Esophagus muscularis mucosa (tissue), 4 donors: ENCODE measurements at regions of chr18 and their contacts with region 1.

Region 1: GRCh38 chr18:741931-742512 is 29.6 kb upstream of the ENOSF1 start:
- DNase-seq: no peak
- H3K4me3 ChIP-seq: no peak overlapping the region
- H3K27ac ChIP-seq: no peak overlapping the region
- H3K4me1 ChIP-seq: no peaks in the 10 kb centered on the region
- H3K27me3 ChIP-seq: no peaks in the 10 kb centered on the region
- CTCF ChIP-seq: peak; percentile 72 to 80 (median 73)
- EP300 ChIP-seq: no peak
- POLR2A ChIP-seq: no peak

Region 2: GRCh38 chr18:830315-830901 is 88.4 kb after region 1 on chr18:
- intact Hi-C with region 1: loop called (anchors 5 kb)
- DNase-seq: no peak
- H3K4me3 ChIP-seq: no peak overlapping the region
- H3K27ac ChIP-seq: peak overlapping the region in 2 of 4 donors; percentile 7 to 14
- H3K4me1 ChIP-seq: peaks cover 4 to 14% (median 4%) of the 10 kb centered on the region in 4 donors
- H3K27me3 ChIP-seq: peaks cover 0 to 13% (median 0%) of the 10 kb centered on the region in 4 donors
- CTCF ChIP-seq: no peak
- EP300 ChIP-seq: no peak
- POLR2A ChIP-seq: no peak

Region 3: GRCh38 chr18:1483385-1483784 is 741.4 kb after region 1 on chr18:
- intact Hi-C with region 1: no loop called
- DNase-seq: no peak
- H3K4me3 ChIP-seq: no peak overlapping the region
- H3K27ac ChIP-seq: no peak overlapping the region
- H3K4me1 ChIP-seq: no peaks in the 10 kb centered on the region
- H3K27me3 ChIP-seq: no peaks in the 10 kb centered on the region
- CTCF ChIP-seq: no peak
- EP300 ChIP-seq: no peak
- POLR2A ChIP-seq: no peak